ENCODE measurements at regions of chr1 and their contacts with region 1.

Region 1: DNA sequence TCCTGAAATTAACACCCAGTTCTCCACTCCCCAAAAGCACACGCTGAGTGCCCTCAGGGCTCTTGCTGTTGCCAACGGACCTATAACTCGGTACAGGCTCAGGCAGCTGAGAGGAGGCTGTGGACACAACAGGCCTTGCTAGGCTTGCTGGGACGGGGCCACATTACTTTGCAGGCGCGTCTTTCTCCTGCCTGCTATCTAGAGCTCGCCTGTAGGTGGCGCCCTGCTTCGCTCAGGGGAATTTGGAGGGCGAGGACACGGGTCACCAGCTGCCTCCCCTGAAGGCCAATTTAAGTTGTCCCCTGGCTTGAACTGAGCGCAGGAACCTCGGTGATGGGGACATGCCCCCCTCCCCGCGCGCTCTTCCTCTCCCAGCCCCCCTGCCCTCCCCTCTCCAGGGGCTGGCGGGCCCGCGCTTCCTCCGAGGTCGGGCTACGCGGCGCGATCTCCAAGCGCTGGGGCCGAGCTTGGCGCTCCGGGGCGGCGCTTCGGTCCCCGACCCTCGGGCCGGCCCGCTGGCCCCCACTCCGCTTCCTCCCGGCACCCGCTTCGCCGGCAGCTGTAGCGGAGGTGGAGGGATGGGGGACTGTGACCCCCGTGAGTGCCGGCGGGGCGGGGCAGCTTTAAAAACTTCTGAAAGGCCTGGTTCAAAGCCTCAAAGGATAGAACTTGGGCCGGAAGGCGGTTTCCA is 32.4 kb upstream of the NFIA start:
- DNase-seq: peak; percentile 97
- ATAC-seq: peak; percentile 69
- H3K4me3 Mint-ChIP-seq: peak overlapping the region; percentile 70
- H3K27ac Mint-ChIP-seq: no peak overlapping the region
- H3K4me1 Mint-ChIP-seq: peaks cover 36% of the 10 kb centered on the region
- H3K27me3 Mint-ChIP-seq: peaks cover 50% of the 10 kb centered on the region
- CTCF ChIP-seq: peak; percentile 94

Region 2: DNA sequence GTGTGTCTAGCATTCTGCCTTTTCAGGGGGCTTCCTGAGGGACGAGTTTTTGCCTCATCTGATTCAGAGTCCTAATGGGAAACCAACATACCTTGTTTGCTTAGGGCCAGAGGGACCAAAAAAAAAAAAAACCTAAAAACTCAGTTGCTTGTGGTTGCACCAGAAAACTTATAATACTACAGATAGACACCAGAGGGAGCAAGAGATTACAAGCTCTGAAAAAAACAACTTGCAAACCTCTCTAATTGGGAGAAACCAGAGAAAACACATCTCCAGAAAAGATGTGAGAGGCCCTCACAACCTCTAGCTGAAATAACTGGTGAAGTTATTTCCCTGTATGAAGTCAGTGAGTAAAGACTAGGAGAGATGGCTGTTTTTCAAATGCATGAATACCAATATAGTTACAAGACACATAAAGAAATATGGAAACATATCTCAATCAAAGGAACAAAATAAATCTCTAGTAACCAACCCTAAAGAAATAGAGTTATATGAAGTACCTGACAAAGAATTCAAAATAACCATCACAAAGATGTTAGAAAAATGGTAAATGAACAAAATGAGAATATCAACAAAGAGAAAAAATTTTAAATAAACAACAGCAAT is 201.3 kb before region 1 on chr1:
- CTCF ChIA-PET with region 1: interaction called, 28 read pairs
- POLR2A ChIA-PET with region 1: no interaction called
- DNase-seq: no peak
- ATAC-seq: peak; percentile 78
- H3K4me3 Mint-ChIP-seq: no peak overlapping the region
- H3K27ac Mint-ChIP-seq: peak overlapping the region; percentile 30
- H3K4me1 Mint-ChIP-seq: peaks cover 23% of the 10 kb centered on the region
- H3K27me3 Mint-ChIP-seq: no peaks in the 10 kb centered on the region
- CTCF ChIP-seq: peak; percentile 61

Region 3: GRCh38 chr1:60942896-60943638 is 106.9 kb before region 1 on chr1:
- CTCF ChIA-PET with region 1: no interaction called
- POLR2A ChIA-PET with region 1: no interaction called
- DNase-seq: no peak
- ATAC-seq: peak; percentile 85
- H3K4me3 Mint-ChIP-seq: no peak overlapping the region
- H3K27ac Mint-ChIP-seq: peak overlapping the region; percentile 18; the same call in 1 of the 2 replicates
- H3K4me1 Mint-ChIP-seq: peaks cover 54% of the 10 kb centered on the region
- H3K27me3 Mint-ChIP-seq: peaks cover 5% of the 10 kb centered on the region
- CTCF ChIP-seq: no peak

Region 4: DNA sequence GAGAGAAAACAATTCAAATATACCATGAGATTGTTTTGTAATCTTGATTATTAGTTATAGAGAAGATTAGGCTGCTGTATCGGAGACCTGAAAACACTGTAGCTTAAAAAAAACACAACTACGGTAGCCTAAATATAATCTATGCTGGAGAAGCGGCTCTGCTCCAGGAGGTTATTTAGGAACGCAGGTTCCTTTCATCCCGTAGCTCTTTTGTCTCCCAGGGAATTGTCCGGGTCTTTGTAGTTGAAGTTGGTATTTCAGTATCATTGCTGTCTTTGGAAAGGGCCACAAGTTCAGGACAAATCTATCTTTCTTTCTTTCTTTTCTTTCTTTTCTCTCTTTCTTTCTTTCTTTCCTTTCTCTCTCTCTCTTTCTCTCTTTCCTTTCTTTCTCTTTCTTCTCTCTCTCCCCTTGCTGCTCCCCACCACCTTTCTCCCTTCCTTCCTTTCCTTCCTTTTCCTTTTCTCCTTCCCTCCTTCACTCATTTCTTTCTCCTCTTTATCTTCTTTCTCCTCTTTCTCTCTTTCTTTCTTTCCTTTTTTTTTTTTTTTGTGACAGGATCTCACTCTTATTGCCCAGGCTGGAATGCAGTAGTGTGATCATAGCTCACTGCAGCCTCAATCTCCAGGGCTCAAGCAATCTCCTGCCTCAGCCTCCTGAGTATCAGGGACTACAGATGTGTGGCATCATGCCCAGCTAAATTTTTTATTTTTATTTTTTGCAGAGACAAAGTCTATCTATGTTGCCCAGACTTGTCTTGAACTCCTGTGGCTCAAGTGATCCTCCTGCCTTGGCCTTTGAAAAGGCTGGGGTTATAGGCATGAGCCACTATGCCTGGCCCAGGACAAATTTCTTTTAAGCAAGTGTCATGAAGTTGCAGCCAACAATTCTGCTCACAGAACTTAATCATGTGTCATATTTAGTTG is 21.5 kb after region 1 on chr1:
- CTCF ChIA-PET with region 1: interaction called, 66 read pairs
- POLR2A ChIA-PET with region 1: no interaction called
- DNase-seq: no peak
- ATAC-seq: peak; percentile 47; the same call in 1 of the 2 replicates
- H3K4me3 Mint-ChIP-seq: no peak overlapping the region
- H3K27ac Mint-ChIP-seq: no peak overlapping the region
- H3K4me1 Mint-ChIP-seq: peaks cover 20% of the 10 kb centered on the region
- H3K27me3 Mint-ChIP-seq: peaks cover 42% of the 10 kb centered on the region
- CTCF ChIP-seq: no peak

Region 5: GRCh38 chr1:61337981-61338848 is 288.2 kb after region 1 on chr1:
- CTCF ChIA-PET with region 1: interaction called, 11 read pairs
- POLR2A ChIA-PET with region 1: no interaction called
- DNase-seq: peak; percentile 25
- ATAC-seq: peak; percentile 86
- H3K4me3 Mint-ChIP-seq: no peak overlapping the region
- H3K27ac Mint-ChIP-seq: peak overlapping the region; percentile 60; the same call in 1 of the 2 replicates
- H3K4me1 Mint-ChIP-seq: peaks cover 34% of the 10 kb centered on the region
- H3K27me3 Mint-ChIP-seq: no peaks in the 10 kb centered on the region
- CTCF ChIP-seq: no peak

Region 6: GRCh38 chr1:61588736-61589672 is 539.0 kb after region 1 on chr1:
- CTCF ChIA-PET with region 1: interaction called, 27 read pairs
- POLR2A ChIA-PET with region 1: interaction called, 4 read pairs
- DNase-seq: peak; percentile 81
- ATAC-seq: peak; percentile 89
- H3K4me3 Mint-ChIP-seq: 0 out of 2 replicates have a peak overlapping the region, but pooled peaks have one; percentile 17
- H3K27ac Mint-ChIP-seq: peak overlapping the region; percentile 71
- H3K4me1 Mint-ChIP-seq: peaks cover 30% of the 10 kb centered on the region
- H3K27me3 Mint-ChIP-seq: no peaks in the 10 kb centered on the region; the same call in 1 of the 2 replicates
- CTCF ChIP-seq: peak; percentile 85

Measured in WTC11 (cell line).